ENCODE measurements at regions of chr18 and their contacts with region 1.

Region 1: GRCh38 chr18:3062798-3063680 is 50.1 kb upstream of the LPIN2 start:
- DNase-seq: peak; percentile 42 to 79 (median 72)
- ATAC-seq: peak; percentile 27
- H3K4me3 ChIP-seq: no peak overlapping the region
- H3K4me3 Mint-ChIP-seq: peak overlapping the region; percentile 58
- H3K27ac ChIP-seq: peak overlapping the region; percentile 88 to 95
- H3K27ac Mint-ChIP-seq: peak overlapping the region; percentile 93
- H3K4me1 ChIP-seq: peaks cover 58% of the 10 kb centered on the region
- H3K4me1 Mint-ChIP-seq: peaks cover 67% of the 10 kb centered on the region
- H3K27me3 ChIP-seq: no peaks in the 10 kb centered on the region
- H3K27me3 Mint-ChIP-seq: no peaks in the 10 kb centered on the region
- CTCF ChIP-seq: peak; percentile 85

Region 2: DNA sequence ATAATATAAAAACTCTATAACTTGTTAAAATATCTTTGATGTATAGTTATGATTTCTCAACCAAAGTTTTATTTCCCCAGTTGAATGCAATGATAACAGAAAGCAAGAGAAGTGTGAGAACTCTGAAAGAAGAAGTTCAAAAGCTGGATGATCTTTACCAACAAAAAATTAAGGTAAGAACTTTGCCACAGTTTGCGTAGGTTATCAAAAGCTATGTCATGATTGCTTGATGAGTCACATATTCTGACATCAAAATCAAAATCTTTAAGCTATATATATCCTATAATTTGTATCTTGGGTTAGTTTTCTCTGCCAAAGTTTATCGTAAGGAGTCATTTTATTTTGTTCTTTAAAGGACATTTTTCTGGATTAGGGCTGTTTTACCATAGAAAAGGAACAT is 456.7 kb before region 1 on chr18:
- CTCF ChIA-PET with region 1: no interaction called
- POLR2A ChIA-PET with region 1: no interaction called
- intact Hi-C with region 1: loop called in 1 of 2 experiments (anchors 5 kb)
- DNase-seq: peak in 2 of 9 experiments; percentile 38 to 70
- ATAC-seq: peak; percentile 56
- H3K4me3 ChIP-seq: no peak overlapping the region
- H3K4me3 Mint-ChIP-seq: peak overlapping the region; percentile 43
- H3K27ac ChIP-seq: peak overlapping the region; percentile 19 to 74
- H3K27ac Mint-ChIP-seq: peak overlapping the region; percentile 85
- H3K4me1 ChIP-seq: peaks cover 33% of the 10 kb centered on the region
- H3K4me1 Mint-ChIP-seq: peaks cover 54% of the 10 kb centered on the region
- H3K27me3 ChIP-seq: no peaks in the 10 kb centered on the region
- H3K27me3 Mint-ChIP-seq: no peaks in the 10 kb centered on the region
- CTCF ChIP-seq: no peak

Region 3: DNA sequence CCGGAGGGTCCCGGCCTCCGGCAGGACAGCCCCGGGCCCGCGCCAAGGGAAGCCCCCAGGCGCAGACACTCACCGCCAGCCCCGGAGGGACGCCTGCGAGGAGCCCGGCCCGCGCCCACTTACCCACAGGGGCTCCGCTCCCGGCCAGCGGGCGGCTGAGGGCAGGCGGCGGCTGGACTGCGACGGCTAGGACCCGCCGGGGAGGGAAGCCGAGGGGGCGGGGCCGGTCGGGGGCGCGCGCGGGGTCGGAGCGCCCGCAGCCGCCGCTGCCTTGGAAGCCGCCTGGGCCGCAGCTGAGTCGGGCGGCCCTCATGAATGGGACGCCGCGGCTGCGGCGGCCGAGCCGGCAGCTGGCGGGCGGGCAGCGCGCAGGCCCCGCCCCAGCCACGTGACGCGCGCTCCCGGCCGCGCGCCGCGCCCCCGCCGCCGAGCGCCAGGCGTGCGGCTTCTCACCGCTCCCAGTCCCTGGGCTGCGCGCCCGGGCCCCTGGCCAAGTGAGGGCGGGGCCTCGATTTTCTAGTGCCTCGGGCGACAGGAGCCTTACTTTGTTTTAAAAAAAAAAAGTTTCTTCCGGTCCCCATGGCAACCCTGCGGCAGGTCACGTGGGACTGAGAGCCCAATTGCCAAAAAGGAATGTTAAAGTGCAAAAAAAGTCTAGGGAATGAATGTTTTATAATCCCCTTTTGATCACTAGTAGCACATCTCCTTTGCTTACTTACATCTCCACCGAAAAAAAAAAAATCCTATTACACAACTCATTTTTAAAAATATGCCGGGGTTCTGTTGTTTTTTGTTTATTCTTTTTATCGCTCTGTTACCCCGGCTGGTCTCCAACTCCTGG is 49.9 kb before region 1 on chr18 and contains the start of gene LPIN2:
- CTCF ChIA-PET with region 1: interaction called, 18 read pairs
- POLR2A ChIA-PET with region 1: interaction called, 21 read pairs
- intact Hi-C with region 1: loop called (anchors 1 kb)
- DNase-seq: peak; percentile 93 to 98 (median 95)
- ATAC-seq: peak; percentile 87
- H3K4me3 ChIP-seq: peak within 1 kb of the TSS; percentile 53
- H3K4me3 Mint-ChIP-seq: peak within 1 kb of the TSS; percentile 95
- H3K27ac ChIP-seq: peak within 1 kb of the TSS; percentile 73 to 79
- H3K27ac Mint-ChIP-seq: peak within 1 kb of the TSS; percentile 93
- H3K4me1 ChIP-seq: peaks cover 55% of the 10 kb centered on the region
- H3K4me1 Mint-ChIP-seq: peaks cover 64% of the 10 kb centered on the region
- H3K27me3 ChIP-seq: no peaks in the 10 kb centered on the region
- H3K27me3 Mint-ChIP-seq: no peaks in the 10 kb centered on the region
- CTCF ChIP-seq: no peak
- total RNA-seq, gene LPIN2: 50.3 to 50.9 TPM

Region 4: DNA sequence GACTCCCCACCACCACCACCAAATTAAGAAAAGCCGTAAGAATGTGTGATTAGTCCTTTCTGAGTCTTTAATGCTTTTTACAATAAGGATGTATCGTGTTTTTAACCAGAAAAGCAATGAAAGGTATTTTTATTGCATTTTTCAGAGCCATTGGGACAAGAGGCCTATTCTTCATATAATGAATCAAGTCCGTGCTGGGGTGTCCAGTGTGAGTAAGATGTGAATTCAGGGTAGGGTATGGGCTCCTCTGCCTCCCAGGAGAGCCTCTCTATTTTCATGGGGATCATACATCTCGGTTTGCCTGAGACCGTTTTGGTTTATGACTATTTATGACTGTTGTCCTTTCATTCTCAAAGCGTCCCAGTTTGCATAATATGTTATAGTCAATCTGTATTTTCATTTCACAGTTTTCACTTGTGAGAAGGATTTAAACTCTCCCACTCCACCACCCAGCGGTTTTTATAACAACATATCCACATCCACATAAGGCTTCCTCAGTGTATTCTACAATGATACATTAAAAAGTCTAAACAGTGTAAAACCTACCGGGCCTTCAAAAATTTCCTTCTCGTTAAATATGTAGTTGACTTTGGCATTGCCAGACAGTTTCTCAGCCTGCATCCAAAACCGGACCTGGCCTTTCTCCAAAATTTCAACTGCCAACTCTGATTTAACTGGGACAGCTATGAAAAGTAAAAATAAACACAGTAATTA is 30.7 kb after region 1 on chr18:
- CTCF ChIA-PET with region 1: interaction called, 13 read pairs
- POLR2A ChIA-PET with region 1: interaction called, 5 read pairs
- intact Hi-C with region 1: loop called in 1 of 2 experiments (anchors 5 kb)
- DNase-seq: no peak
- ATAC-seq: no peak
- H3K4me3 ChIP-seq: no peak overlapping the region
- H3K4me3 Mint-ChIP-seq: no peak overlapping the region
- H3K27ac ChIP-seq: no peak overlapping the region
- H3K27ac Mint-ChIP-seq: no peak overlapping the region
- H3K4me1 ChIP-seq: peaks cover 21% of the 10 kb centered on the region
- H3K4me1 Mint-ChIP-seq: peaks cover 25% of the 10 kb centered on the region
- H3K27me3 ChIP-seq: no peaks in the 10 kb centered on the region
- H3K27me3 Mint-ChIP-seq: no peaks in the 10 kb centered on the region
- CTCF ChIP-seq: no peak

Region 5: DNA sequence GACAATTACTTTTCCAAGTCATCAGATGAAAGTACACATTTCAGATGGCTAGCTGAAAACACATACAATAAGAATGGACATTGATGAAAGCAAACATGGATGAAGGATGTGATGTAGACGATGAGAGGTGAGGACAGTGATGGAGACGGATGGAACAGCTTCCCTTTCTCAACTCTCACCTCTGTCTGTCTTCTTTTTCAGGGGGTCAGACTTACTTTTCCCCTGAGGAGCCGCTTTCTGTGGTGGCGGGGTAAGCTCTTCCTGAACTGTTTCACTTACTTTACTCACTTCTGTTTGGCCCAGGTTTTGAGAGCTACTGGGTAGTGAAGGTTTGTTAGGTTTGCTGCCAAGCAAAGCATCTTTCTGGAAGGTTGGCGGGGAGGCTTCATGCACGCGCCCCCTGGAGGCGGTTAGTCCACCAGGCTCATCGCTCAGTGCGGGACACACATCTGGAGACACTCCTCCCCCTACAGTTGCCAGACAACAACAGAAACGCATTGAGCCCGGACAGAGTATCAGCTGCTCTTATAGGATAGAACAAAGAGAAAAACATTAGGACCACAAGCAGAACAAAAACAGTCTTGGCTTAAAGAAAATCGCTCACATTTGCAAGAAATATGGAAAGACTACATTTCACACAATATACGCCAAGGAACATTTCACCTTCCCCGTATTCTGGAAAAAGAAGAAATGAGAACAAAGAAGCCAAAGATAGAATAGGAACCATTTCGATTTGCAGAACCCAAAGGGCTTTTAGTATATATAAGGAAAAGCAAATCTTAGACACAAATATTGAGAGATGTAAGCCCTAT is 66.2 kb after region 1 on chr18:
- CTCF ChIA-PET with region 1: interaction called, 25 read pairs
- POLR2A ChIA-PET with region 1: interaction called, 4 read pairs
- intact Hi-C with region 1: loop called in 1 of 2 experiments (anchors 1 kb)
- DNase-seq: peak; percentile 58 to 86 (median 77)
- ATAC-seq: peak; percentile 99
- H3K4me3 ChIP-seq: no peak overlapping the region
- H3K4me3 Mint-ChIP-seq: no peak overlapping the region
- H3K27ac ChIP-seq: no peak overlapping the region
- H3K27ac Mint-ChIP-seq: no peak overlapping the region
- H3K4me1 ChIP-seq: no peaks in the 10 kb centered on the region
- H3K4me1 Mint-ChIP-seq: peaks cover 9% of the 10 kb centered on the region
- H3K27me3 ChIP-seq: no peaks in the 10 kb centered on the region
- H3K27me3 Mint-ChIP-seq: no peaks in the 10 kb centered on the region
- CTCF ChIP-seq: peak; percentile 67